Kidney (tissue), 22 donors: ENCODE measurements at regions of chr17 and their contacts with region 1.

Region 1: DNA sequence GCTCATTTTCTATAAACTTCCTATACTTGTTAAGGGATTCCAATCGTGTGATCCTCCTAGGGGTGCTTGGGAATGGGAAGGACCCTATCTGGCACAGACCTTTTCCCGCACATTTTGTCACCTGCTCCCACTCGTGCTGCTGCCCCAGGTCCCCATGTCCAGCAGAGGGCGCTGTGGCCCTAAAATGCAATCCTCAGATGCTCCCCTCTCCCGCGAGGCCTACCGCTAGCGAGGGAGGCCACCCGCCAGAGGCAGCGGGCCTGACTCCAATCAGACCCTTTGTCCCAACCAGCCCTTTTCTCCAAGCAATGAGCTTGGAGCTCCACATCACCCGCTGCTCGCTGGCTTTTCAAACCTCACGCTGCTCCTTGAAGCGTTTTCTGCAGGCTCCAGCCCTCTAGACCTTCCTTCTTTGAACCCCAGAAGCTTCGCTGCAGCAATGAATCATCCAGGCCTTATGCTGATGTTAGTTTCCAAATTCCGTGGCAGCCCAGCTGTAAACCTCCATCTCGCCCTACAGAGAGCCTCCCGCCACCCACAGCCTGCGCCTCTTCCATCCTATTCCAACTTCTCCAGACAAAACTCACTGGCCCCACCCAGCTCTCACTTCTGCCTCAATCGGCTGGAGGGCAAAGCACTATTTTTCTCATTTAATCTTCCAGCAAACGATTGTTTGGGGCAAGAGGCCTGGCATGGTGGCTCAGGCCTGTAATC is 23.6 kb upstream of the FZD2 start:
- DNase-seq: peak; percentile 94 to 96 (median 95)
- H3K4me3 ChIP-seq: no peak overlapping the region
- H3K27ac ChIP-seq: no peak overlapping the region
- H3K4me1 ChIP-seq: peaks cover 0 to 4% (median 0%) of the 10 kb centered on the region in 3 donors
- H3K27me3 ChIP-seq: no peaks in the 10 kb centered on the region
- CTCF ChIP-seq: peak; percentile 97

Region 2: DNA sequence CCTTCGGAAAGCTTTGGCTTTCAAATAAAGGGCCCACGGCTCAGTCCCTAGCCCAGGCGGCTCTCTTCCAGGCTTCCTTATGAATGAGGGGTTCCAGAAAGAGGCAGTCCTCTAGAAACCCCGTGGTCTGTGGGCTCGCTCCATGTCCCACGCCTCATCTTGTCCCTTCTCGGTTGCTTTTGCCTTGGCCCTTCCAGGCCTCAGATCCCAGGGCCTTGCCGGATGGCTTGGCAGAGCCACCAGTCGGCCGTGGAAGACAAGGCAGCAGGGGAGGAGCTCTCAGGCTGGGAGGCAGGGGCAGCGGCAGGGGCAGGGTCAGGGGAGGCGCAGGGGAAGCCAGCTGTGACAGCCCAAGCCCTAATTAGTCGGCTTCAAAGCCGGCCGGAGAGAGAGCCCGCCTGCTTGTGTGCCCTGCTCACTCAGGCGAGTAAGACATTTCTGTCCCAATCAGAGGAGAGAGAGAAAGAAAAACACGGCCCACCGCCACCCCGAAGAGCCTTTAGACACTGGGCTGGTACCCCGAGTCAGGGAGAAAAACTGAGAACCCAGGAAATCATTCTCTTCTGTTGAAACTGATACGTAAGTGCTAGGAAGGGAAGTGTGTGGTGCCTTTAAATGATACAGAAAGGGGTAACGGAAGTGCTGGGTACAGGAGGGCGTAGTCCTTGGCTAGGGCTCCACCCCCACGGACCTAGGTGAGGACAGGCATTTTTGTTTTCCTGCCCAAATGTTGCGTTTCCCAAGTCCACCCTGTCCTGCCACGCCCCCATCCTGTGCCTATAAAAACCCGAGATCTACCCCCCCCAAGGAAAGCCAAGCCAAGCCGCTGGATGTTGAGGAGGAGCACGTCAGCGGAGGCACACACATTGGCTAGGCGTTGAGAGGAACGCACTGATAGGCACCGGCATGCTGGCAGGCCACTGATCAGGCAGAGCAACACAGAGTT is 94.8 kb after region 1 on chr17:
- intact Hi-C with region 1: loop called (anchors 5 kb)
- DNase-seq: peak; percentile 91 to 97 (median 97)
- H3K4me3 ChIP-seq: peak overlapping the region; percentile 44 to 54 (median 45)
- H3K27ac ChIP-seq: peak overlapping the region in 1 of 2 donors; percentile 41
- H3K4me1 ChIP-seq: peaks cover 3 to 8% (median 5%) of the 10 kb centered on the region in 3 donors
- H3K27me3 ChIP-seq: no peaks in the 10 kb centered on the region
- CTCF ChIP-seq: peak; percentile 3